ENCODE measurements at regions of chr11 and their contacts with region 1.

Region 1: DNA sequence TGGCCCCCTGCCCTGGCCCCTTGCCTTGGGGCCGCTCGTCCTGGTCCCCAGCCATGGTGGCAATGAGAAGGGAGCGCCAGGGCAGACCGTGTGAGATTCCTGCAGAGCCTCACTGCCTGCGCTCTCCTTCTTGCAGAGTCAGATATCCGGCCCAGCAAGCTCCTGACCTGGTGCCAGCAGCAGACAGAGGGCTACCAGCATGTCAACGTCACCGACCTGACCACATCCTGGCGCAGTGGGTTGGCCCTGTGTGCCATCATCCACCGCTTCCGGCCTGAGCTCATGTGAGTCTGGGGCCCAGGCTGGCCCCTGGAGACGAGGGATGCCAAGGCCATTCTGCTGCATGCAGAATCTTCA is 114.1 kb downstream of the MICAL2 start:
- DNase-seq: no peak
- H3K4me3 ChIP-seq: no peak overlapping the region
- H3K4me3 Mint-ChIP-seq: peak overlapping the region; percentile 6
- H3K27ac Mint-ChIP-seq: peak overlapping the region; percentile 81
- H3K4me1 ChIP-seq: peaks cover 56% of the 10 kb centered on the region
- H3K4me1 Mint-ChIP-seq: peaks cover 42% of the 10 kb centered on the region
- H3K27me3 ChIP-seq: no peaks in the 10 kb centered on the region
- H3K27me3 Mint-ChIP-seq: no peaks in the 10 kb centered on the region
- CTCF ChIP-seq: no peak

Region 2: DNA sequence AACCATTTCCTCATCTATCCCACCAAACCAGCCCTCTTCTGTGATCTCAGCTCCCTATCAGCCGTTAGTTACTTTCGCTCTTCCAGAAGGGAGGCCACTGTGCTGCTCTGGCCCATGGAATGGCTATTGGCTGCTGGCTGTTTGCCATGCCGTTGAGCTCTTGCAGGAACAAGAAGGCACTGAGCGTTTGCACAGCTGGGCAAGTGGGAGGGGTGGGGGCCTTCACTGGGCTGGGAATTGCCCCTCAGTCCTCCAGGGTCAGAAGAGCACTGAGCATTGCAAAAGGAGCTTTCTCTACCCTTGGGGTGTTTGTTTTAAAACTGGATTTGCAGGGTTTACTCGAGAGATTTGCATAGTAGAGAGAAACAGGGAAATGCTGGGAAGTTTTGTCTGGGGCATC is 23.8 kb after region 1 on chr11:
- CTCF ChIA-PET with region 1: no interaction called
- POLR2A ChIA-PET with region 1: interaction called, 14 read pairs
- intact Hi-C with region 1: no loop called
- DNase-seq: peak; percentile 97 to 99
- H3K4me3 ChIP-seq: no peak overlapping the region
- H3K4me3 Mint-ChIP-seq: peak overlapping the region; percentile 58
- H3K27ac Mint-ChIP-seq: peak overlapping the region; percentile 85
- H3K4me1 ChIP-seq: peaks cover 79% of the 10 kb centered on the region
- H3K4me1 Mint-ChIP-seq: peaks cover 43% of the 10 kb centered on the region
- H3K27me3 ChIP-seq: no peaks in the 10 kb centered on the region
- H3K27me3 Mint-ChIP-seq: no peaks in the 10 kb centered on the region
- CTCF ChIP-seq: no peak

Measured in Caco-2 (cell line).